Endothelial cell of umbilical vein (primary cell): ENCODE measurements at regions of chr11 and their contacts with region 1.

Region 1: DNA sequence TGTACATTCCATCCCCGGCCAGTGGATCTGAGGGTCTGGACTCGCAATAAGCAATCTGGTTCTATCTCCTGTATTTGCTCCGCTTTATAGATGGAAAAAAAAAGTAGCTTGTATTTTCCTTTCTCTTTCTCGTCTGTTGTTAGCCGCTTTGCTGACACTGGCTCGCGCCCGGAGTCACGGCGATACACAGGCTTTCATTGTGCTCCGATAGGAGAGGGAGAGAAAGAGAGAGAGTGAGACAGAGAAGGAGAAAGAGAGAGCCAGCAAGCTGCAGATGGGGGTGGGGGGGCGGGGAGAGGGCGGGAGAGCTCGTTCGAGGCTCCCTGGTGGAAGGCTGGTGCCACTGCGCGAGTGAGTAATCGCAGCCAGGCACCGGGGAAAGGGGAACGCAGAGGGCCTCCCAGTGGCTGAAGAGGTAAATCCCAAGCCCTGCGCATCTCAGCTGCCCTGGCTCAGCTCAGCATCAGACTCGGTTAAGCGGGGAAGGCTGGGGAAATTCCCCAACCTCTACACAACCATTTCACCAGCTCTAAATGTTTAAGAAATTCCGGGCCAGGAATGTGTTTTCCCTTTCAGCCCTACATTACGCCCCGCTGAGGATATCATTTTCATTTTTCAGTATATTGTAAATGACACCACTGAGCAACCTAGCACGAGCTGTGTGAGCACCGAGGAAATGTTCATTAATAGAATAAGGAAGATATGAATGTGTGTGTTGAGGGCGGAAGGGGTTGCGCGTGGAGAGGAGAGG is at the start of gene MAML2:
- DNase-seq: peak; percentile 91
- H3K4me3 ChIP-seq: peak within 1 kb of the TSS; percentile 59 to 98 (median 94)
- H3K27ac ChIP-seq: peak within 1 kb of the TSS; percentile 88
- H3K4me1 ChIP-seq: peaks cover 30% of the 10 kb centered on the region
- H3K27me3 ChIP-seq: no peaks in the 10 kb centered on the region
- CTCF ChIP-seq: peak; percentile 76 to 96
- POLR2A ChIP-seq: no peak
- total RNA-seq, gene MAML2: 16.8 and 17.1 TPM in 2 replicates

Region 2: DNA sequence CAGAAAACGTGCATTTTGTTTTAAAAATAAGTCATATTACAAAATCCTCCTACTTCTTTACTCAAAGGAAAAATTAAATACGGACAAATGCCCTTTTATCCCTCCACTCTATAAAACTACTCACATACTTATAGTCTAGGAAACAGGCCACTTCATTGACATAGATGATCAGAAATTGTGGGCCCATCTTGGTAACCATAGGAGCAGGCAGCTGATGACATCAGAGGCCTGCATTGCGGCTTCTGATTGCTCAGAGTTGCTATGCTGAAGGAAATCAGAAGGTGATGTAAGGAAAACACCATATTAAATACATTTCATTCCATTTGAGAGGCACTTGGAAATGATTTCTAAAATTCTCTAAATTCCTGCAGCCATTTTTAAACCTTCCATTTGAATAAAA is 580.6 kb before region 1 on chr11:
- CTCF ChIA-PET with region 1: no interaction called
- POLR2A ChIA-PET with region 1: no interaction called
- dilution Hi-C with region 1: no loop called
- intact Hi-C with region 1: no loop called
- DNase-seq: no peak
- H3K4me3 ChIP-seq: no peak overlapping the region
- H3K27ac ChIP-seq: no peak overlapping the region
- H3K4me1 ChIP-seq: no peaks in the 10 kb centered on the region
- H3K27me3 ChIP-seq: peaks cover 5 to 6% of the 10 kb centered on the region in 2 experiments
- CTCF ChIP-seq: no peak
- POLR2A ChIP-seq: no peak

Region 3: DNA sequence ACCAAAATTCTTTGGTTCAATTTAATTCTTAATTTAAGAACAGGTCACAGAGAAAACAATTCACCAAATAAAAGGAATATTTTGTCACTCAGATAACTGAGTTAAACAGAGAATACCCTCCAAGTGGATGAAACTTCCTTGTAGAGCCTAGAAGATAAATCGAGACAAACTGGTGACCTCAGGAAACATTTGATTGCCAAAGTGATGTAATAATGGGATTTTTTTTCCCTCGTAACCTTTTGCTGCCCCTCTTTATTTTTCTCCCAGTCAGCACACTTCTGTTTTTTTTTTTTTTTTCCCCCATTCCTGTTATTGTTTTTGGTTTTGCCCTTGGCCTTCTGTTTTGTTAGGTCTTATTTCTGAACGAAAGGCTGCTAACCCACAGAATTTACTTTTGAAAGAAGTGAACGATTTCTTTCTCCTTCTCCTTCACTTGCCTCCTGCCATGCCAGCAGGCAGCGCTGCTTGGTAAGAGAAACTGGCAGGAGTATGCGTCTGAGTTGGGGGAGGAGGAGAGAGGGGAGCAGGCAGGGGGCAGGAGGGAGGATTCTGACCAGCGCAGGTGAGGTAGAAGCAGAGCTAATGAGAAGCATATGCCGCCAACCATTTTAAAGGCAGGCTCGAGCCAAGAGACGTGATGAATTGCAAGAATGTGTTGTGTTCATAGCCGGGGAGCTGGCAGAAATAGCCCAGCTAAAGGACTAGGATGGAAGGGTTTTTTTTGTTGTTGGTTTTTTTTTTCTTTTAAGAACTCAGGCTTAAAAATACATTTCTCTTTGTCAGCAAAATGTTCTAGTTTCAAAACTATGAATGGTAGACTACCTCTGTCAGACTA is 297.3 kb before region 1 on chr11:
- CTCF ChIA-PET with region 1: interaction called, 215 read pairs
- POLR2A ChIA-PET with region 1: no interaction called
- dilution Hi-C with region 1: no loop called
- intact Hi-C with region 1: no loop called
- DNase-seq: peak; percentile 47
- H3K4me3 ChIP-seq: no peak overlapping the region
- H3K27ac ChIP-seq: peak overlapping the region; percentile 9
- H3K4me1 ChIP-seq: peaks cover 6% of the 10 kb centered on the region
- H3K27me3 ChIP-seq: no peaks in the 10 kb centered on the region
- CTCF ChIP-seq: peak in 1 of 2 donors; percentile 14
- POLR2A ChIP-seq: no peak

Region 4: DNA sequence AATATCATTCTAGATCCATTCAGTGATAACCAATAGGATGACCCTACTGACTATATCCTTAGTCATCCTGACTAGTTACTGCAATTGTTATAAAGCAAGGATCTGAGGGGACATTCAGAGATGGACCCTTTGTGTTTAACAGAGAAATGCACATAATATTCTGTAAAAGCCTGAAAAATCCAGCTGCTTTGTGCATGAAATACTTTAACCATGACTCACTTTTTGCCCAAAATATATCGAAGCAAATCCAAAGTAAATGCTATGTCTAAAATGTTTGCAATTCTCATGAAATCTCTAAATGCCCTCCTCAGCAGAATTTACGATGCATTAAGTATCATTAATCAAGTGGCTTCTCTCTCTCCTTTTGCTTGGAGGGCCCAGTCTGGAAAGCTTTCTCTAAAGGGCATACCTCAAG is 240.5 kb before region 1 on chr11:
- CTCF ChIA-PET with region 1: interaction called, 11 read pairs
- POLR2A ChIA-PET with region 1: no interaction called
- dilution Hi-C with region 1: no loop called
- intact Hi-C with region 1: loop called (anchors 5 kb)
- DNase-seq: peak; percentile 55
- H3K4me3 ChIP-seq: no peak overlapping the region
- H3K27ac ChIP-seq: peak overlapping the region; percentile 74
- H3K4me1 ChIP-seq: peaks cover 30% of the 10 kb centered on the region
- H3K27me3 ChIP-seq: no peaks in the 10 kb centered on the region
- CTCF ChIP-seq: no peak
- POLR2A ChIP-seq: no peak

Region 5: GRCh38 chr11:96199563-96200025 is 143.5 kb before region 1 on chr11:
- CTCF ChIA-PET with region 1: interaction called, 10 read pairs
- POLR2A ChIA-PET with region 1: no interaction called
- dilution Hi-C with region 1: no loop called
- intact Hi-C with region 1: no loop called
- DNase-seq: peak; percentile 45
- H3K4me3 ChIP-seq: no peak overlapping the region
- H3K27ac ChIP-seq: no peak overlapping the region
- H3K4me1 ChIP-seq: peaks cover 6% of the 10 kb centered on the region
- H3K27me3 ChIP-seq: no peaks in the 10 kb centered on the region
- CTCF ChIP-seq: no peak
- POLR2A ChIP-seq: no peak

Region 6: GRCh38 chr11:96254087-96254486 is 89.0 kb before region 1 on chr11:
- CTCF ChIA-PET with region 1: interaction called, 25 read pairs
- POLR2A ChIA-PET with region 1: no interaction called
- dilution Hi-C with region 1: no loop called
- intact Hi-C with region 1: no loop called
- DNase-seq: peak; percentile 94
- H3K4me3 ChIP-seq: peak overlapping the region in 1 of 3 experiments; percentile 58
- H3K27ac ChIP-seq: peak overlapping the region; percentile 65
- H3K4me1 ChIP-seq: peaks cover 33% of the 10 kb centered on the region
- H3K27me3 ChIP-seq: no peaks in the 10 kb centered on the region
- CTCF ChIP-seq: no peak
- POLR2A ChIP-seq: peak; percentile 36

Region 7: DNA sequence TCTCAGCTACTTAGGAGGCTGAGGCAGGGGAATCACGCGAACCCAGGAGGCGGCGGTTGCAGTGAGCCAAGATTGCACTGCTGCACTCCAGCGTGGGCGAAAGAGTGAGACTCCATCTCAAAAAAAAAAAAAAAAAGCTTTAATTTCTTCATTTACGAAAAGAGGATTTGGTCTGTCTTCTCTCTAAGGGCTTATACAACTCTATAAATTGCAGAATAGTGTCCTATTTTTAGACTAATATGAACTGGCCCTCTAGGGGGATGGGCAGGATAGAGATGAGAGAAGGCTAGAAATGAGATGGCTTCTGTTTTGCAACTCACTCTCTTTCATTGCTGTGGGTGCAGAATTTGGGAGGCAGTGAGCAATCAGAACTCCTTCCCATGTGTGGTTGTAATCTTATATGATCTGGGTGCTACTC is 11.4 kb before region 1 on chr11:
- CTCF ChIA-PET with region 1: interaction called, 20 read pairs
- POLR2A ChIA-PET with region 1: interaction called, 3 read pairs
- dilution Hi-C with region 1: no loop called
- intact Hi-C with region 1: no loop called
- DNase-seq: no peak
- H3K4me3 ChIP-seq: no peak overlapping the region
- H3K27ac ChIP-seq: no peak overlapping the region
- H3K4me1 ChIP-seq: peaks cover 2% of the 10 kb centered on the region
- H3K27me3 ChIP-seq: no peaks in the 10 kb centered on the region
- CTCF ChIP-seq: no peak
- POLR2A ChIP-seq: no peak

Region 8: DNA sequence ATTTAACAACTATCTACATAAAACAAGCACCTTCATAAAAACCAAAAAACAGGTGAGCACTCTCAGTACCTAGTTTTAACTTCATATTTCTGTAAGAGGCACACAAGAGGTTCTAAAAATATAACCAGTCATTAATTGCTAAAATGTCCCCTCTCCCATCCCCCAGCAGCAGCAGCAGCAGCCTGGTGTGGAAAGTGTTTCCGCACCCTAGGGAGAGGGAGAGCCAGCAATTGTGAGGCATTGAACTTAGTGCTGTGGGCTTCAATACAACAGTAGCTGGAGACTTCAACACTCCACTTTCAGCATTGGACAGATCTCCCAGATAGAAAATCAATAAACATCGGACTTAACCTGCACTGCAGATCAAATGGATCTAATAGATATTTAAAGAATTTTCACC is 1205.1 kb after region 1 on chr11:
- CTCF ChIA-PET with region 1: no interaction called
- POLR2A ChIA-PET with region 1: no interaction called
- dilution Hi-C with region 1: no loop called
- intact Hi-C with region 1: no loop called
- DNase-seq: no peak
- H3K4me3 ChIP-seq: no peak overlapping the region
- H3K27ac ChIP-seq: no peak overlapping the region
- H3K4me1 ChIP-seq: no peaks in the 10 kb centered on the region
- H3K27me3 ChIP-seq: no peaks in the 10 kb centered on the region
- CTCF ChIP-seq: no peak
- POLR2A ChIP-seq: no peak